H1 (cell line): ENCODE measurements at regions of chr20 and their contacts with region 1.

Region 1: GRCh38 chr20:47501483-47502270 is at the start of gene NCOA3:
- DNase-seq: peak; percentile 78 to 97
- H3K4me3 ChIP-seq: peak within 1 kb of the TSS; percentile 74 to 89 (median 84)
- H3K27ac ChIP-seq: peak within 1 kb of the TSS; percentile 60; the same call in 1 of the 2 replicates
- H3K4me1 ChIP-seq: peaks cover 0 to 9% (median 2%) of the 10 kb centered on the region in 4 experiments; a peak in 4 of 7 replicates
- H3K27me3 ChIP-seq: no peaks in the 10 kb centered on the region
- CTCF ChIP-seq: no peak; a peak in 1 of 4 replicates
- EP300 ChIP-seq: peak in 1 of 2 experiments; percentile 77; a peak in 1 of 3 replicates
- POLR2A ChIP-seq: peak; percentile 94 to 96
- RAD21 ChIP-seq: peak in 1 of 2 experiments; percentile 15; a peak in 2 of 4 replicates
- total RNA-seq, gene NCOA3: 21.1 and 24.7 TPM in 2 replicates

Region 2: DNA sequence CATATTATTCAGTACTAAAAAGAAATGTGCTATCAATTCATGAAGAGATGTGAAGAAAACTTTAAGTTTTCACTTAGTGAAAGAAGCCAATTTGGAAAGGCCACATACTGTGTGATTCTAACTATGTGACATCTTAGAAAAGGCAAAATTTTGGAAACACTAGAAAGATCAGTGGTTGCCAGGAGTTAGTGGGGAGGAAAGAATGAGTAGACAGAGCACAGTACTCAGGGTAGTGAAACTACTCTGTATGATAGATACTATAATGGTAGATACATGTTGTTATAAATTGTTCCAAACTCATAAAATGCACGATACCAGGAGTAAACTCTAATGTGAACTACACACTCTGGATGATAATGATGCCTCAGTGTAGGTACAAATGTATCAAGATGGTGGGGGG is 14.2 kb after region 1 on chr20:
- CTCF ChIA-PET with region 1: interaction called, 16 read pairs
- POLR2A ChIA-PET with region 1: interaction called, 32 read pairs
- DNase-seq: no peak
- H3K4me3 ChIP-seq: no peak overlapping the region
- H3K27ac ChIP-seq: no peak overlapping the region
- H3K4me1 ChIP-seq: peaks cover 0 to 6% (median 4%) of the 10 kb centered on the region in 4 experiments; a peak in 4 of 7 replicates
- H3K27me3 ChIP-seq: no peaks in the 10 kb centered on the region
- CTCF ChIP-seq: no peak
- EP300 ChIP-seq: no peak
- POLR2A ChIP-seq: no peak
- RAD21 ChIP-seq: no peak